ENCODE measurements at regions of chr20 and their contacts with region 1.

Region 1: GRCh38 chr20:49278036-49278817 is at the start of gene ZNFX1:
- DNase-seq: peak; percentile 99
- H3K4me3 Mint-ChIP-seq: peak within 1 kb of the TSS; percentile 99
- H3K27ac Mint-ChIP-seq: peak within 1 kb of the TSS; percentile 99
- H3K4me1 Mint-ChIP-seq: peaks cover 51% of the 10 kb centered on the region
- H3K27me3 Mint-ChIP-seq: peaks cover 2% of the 10 kb centered on the region
- total RNA-seq, gene ZNFX1: 42.5 to 45.3 TPM

Region 2: DNA sequence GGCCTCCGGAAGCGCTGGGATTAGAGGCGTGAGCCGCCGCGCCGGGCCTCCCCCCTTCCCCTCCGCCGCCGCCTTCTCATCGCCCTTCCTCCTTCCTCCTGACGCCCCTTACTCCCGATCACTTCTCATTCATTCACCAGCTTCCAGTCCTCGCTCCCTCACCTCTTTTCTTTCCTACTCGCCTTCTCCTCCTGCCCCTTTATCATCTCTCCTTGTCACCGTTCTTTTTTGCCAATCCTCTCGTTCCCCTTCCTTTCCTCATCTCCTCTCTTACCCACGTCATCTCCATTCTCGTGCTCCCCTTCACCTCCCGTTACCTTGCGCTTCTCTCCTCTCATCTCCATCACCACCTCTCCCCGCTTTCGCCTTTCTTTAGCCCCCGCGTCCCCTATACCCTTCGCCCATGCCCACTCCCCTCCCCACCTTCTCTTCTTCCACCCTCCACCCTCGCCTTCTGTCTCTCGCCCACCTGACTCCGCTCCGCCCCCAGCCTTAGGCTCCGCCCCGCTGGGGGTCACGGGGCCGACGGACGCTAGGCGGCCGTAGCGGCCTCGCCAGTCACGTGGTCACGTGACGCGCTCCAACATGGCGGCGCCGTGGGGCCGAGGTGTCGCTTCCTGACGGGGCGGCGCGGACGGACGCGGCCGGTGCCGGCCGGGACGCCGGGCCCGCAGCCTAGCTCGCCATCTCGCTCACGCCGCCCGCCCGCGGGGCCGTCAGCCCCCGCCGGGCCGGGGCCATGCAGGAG is 356.9 kb before region 1 on chr20 and contains the start of gene ARFGEF2:
- CTCF ChIA-PET with region 1: no interaction called
- POLR2A ChIA-PET with region 1: no interaction called
- intact Hi-C with region 1: loop called (anchors 5 kb)
- DNase-seq: peak; percentile 96
- H3K4me3 Mint-ChIP-seq: peak within 1 kb of the TSS; percentile 91
- H3K27ac Mint-ChIP-seq: peak within 1 kb of the TSS; percentile 90
- H3K4me1 Mint-ChIP-seq: peaks cover 47% of the 10 kb centered on the region
- H3K27me3 Mint-ChIP-seq: no peaks in the 10 kb centered on the region
- total RNA-seq, gene ARFGEF2: 21.9 to 22.1 TPM

Region 3: GRCh38 chr20:49186535-49187329 is 91.5 kb before region 1 on chr20:
- CTCF ChIA-PET with region 1: no interaction called
- POLR2A ChIA-PET with region 1: interaction called, 5 read pairs
- intact Hi-C with region 1: loop called (anchors 1 kb)
- DNase-seq: peak; percentile 79
- H3K4me3 Mint-ChIP-seq: peak overlapping the region; percentile 87
- H3K27ac Mint-ChIP-seq: peak overlapping the region; percentile 89
- H3K4me1 Mint-ChIP-seq: peaks cover 48% of the 10 kb centered on the region
- H3K27me3 Mint-ChIP-seq: no peaks in the 10 kb centered on the region

Region 4: GRCh38 chr20:49256261-49256660 is 22.0 kb before region 1 on chr20:
- CTCF ChIA-PET with region 1: interaction called, 3 read pairs
- POLR2A ChIA-PET with region 1: interaction called, 10 read pairs
- intact Hi-C with region 1: no loop called
- DNase-seq: no peak
- H3K4me3 Mint-ChIP-seq: no peak overlapping the region
- H3K27ac Mint-ChIP-seq: no peak overlapping the region
- H3K4me1 Mint-ChIP-seq: peaks cover 20% of the 10 kb centered on the region
- H3K27me3 Mint-ChIP-seq: no peaks in the 10 kb centered on the region

Region 5: GRCh38 chr20:49435659-49436058 is 157.4 kb after region 1 on chr20:
- CTCF ChIA-PET with region 1: no interaction called
- POLR2A ChIA-PET with region 1: no interaction called
- intact Hi-C with region 1: no loop called
- DNase-seq: no peak
- H3K4me3 Mint-ChIP-seq: no peak overlapping the region
- H3K27ac Mint-ChIP-seq: no peak overlapping the region
- H3K4me1 Mint-ChIP-seq: no peaks in the 10 kb centered on the region
- H3K27me3 Mint-ChIP-seq: peaks cover 14% of the 10 kb centered on the region

Region 6: DNA sequence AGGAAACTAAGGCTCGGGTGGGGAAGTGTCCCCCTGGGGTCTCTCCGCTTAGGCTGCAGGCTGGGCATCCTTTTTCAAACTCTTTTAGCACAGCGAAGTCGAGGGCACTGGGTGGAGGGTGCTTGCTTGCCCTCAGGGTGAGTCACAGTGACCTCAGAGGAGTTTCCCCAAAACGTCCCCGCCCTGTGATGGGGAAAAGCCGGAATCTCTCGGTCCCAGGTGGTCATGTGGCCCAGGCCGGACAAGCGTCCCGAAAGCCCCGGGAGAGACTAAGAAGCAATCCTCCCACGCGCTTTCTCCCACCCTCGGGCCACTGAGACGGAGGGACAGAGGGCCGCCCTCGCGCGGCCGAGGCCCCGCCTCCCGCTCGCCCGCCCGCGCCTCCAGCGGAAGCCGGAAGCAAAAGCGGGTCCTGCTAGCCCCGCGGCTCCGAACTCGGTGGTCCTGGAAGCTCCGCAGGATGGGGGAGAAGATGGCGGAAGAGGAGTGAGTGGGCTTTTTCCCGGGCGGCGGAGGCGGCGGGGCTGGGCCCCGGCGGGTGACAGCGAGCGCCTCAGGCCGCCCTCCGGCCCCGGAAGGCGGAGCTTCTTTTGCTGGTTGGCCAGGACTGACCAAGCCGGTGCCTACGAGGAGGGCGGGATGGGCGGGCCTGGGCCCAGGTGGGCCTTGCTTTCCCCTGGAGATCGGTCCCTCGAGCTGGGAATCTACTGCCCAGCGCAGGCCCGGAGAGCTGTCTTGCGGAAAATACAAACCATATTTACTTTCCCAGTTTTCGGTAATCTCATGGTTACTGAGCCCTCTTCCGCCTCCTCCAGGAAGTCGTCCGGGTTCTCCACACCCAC is 534.5 kb after region 1 on chr20 and contains the start of gene SLC9A8:
- CTCF ChIA-PET with region 1: no interaction called
- POLR2A ChIA-PET with region 1: no interaction called
- intact Hi-C with region 1: loop called (anchors 10 kb)
- DNase-seq: peak; percentile 92
- H3K4me3 Mint-ChIP-seq: peak within 1 kb of the TSS; percentile 89
- H3K27ac Mint-ChIP-seq: peak within 1 kb of the TSS; percentile 94
- H3K4me1 Mint-ChIP-seq: peaks cover 34% of the 10 kb centered on the region
- H3K27me3 Mint-ChIP-seq: no peaks in the 10 kb centered on the region
- total RNA-seq, gene SLC9A8: 11.5 to 13.0 TPM